Naive thymus-derived CD4-positive, alpha-beta T cell (primary cell): ENCODE measurements at regions of chr2 and their contacts with region 1.

Region 1: DNA sequence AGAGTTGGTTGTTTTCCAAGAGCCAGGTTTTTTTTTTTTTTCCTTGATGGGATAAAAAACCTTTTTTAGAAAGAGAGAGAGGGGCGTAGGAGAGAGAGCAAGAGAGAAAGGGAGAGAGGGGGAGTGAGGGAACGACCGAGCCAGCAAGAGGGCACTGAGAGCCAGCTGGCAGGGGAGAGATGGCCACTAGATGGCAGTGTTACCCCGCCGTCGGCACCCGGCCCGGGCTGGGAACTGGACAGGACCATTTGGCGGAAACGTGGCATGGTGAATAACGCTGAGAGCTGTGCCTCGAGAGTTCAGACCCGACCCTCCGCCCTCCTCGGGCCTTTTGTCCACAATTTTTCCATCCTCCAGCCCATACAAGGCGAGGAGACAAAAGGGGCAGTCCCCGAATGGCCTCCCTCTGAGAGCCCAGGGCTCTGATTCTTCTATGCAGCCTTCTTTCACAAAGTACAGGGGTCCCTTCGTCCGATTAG is 286.7 kb upstream of the VRK2 start:
- DNase-seq: peak; percentile 23 to 80 (median 64)
- ATAC-seq: peak; percentile 83
- H3K4me3 ChIP-seq: no peak overlapping the region
- H3K4me3 Mint-ChIP-seq: peak overlapping the region in 5 of 10 donors; percentile 9 to 44 (median 20)
- H3K27ac ChIP-seq: no peak overlapping the region
- H3K27ac Mint-ChIP-seq: no peak overlapping the region
- H3K4me1 ChIP-seq: peaks cover 0 to 7% of the 10 kb centered on the region in 2 donors
- H3K4me1 Mint-ChIP-seq: peaks cover 0 to 3% (median 0%) of the 10 kb centered on the region in 7 donors
- H3K27me3 ChIP-seq: no peaks in the 10 kb centered on the region
- H3K27me3 Mint-ChIP-seq: peaks cover 0 to 17% (median 5%) of the 10 kb centered on the region in 5 donors

Region 2: GRCh38 chr2:57570961-57571360 is 188.9 kb before region 1 on chr2:
- CTCF ChIA-PET with region 1: no interaction called
- POLR2A ChIA-PET with region 1: no interaction called
- intact Hi-C with region 1: no loop called
- DNase-seq: no peak
- ATAC-seq: no peak
- H3K4me3 ChIP-seq: no peak overlapping the region
- H3K4me3 Mint-ChIP-seq: no peak overlapping the region
- H3K27ac ChIP-seq: no peak overlapping the region
- H3K27ac Mint-ChIP-seq: no peak overlapping the region
- H3K4me1 ChIP-seq: no peaks in the 10 kb centered on the region
- H3K4me1 Mint-ChIP-seq: peaks cover 0 to 2% (median 0%) of the 10 kb centered on the region in 7 donors
- H3K27me3 ChIP-seq: no peaks in the 10 kb centered on the region
- H3K27me3 Mint-ChIP-seq: no peaks in the 10 kb centered on the region

Region 3: DNA sequence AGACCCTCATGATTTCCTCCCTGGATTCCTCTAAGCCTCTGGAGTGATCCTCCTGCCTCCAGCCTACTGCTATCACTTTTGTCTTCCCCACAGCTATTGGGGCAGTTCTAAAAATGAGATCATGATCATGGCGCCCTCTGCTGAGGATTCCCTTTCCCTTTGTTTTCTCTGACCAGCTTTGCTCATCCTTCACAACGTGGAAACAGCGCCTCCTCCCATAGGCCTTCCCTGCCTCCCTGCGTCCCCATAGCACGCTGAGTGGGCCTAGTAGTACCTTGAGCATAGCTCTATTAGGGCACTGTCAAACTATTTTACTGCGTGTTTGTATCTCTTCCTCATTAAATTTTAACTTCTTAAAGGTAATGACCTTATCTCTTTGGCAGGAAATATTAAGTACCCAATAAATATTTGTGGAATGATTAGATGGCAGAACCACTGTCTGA is 688.2 kb after region 1 on chr2:
- CTCF ChIA-PET with region 1: no interaction called
- POLR2A ChIA-PET with region 1: no interaction called
- intact Hi-C with region 1: loop called (anchors 1 to 2 kb)
- DNase-seq: no peak
- ATAC-seq: peak; percentile 22
- H3K4me3 ChIP-seq: no peak overlapping the region
- H3K4me3 Mint-ChIP-seq: no peak overlapping the region
- H3K27ac ChIP-seq: no peak overlapping the region
- H3K27ac Mint-ChIP-seq: no peak overlapping the region
- H3K4me1 ChIP-seq: no peaks in the 10 kb centered on the region
- H3K4me1 Mint-ChIP-seq: no peaks in the 10 kb centered on the region
- H3K27me3 ChIP-seq: no peaks in the 10 kb centered on the region
- H3K27me3 Mint-ChIP-seq: peaks cover 6 to 16% (median 15%) of the 10 kb centered on the region in 5 donors

Region 4: GRCh38 chr2:59584958-59585357 is 1825.1 kb after region 1 on chr2:
- CTCF ChIA-PET with region 1: no interaction called
- POLR2A ChIA-PET with region 1: no interaction called
- intact Hi-C with region 1: loop called (anchors 10 kb)
- DNase-seq: no peak
- ATAC-seq: no peak
- H3K4me3 ChIP-seq: no peak overlapping the region
- H3K4me3 Mint-ChIP-seq: no peak overlapping the region
- H3K27ac ChIP-seq: no peak overlapping the region
- H3K27ac Mint-ChIP-seq: no peak overlapping the region
- H3K4me1 ChIP-seq: no peaks in the 10 kb centered on the region
- H3K4me1 Mint-ChIP-seq: peaks cover 0 to 2% (median 0%) of the 10 kb centered on the region in 7 donors
- H3K27me3 ChIP-seq: no peaks in the 10 kb centered on the region
- H3K27me3 Mint-ChIP-seq: no peaks in the 10 kb centered on the region